Astrocyte of the cerebellum (primary cell): ENCODE measurements at regions of chr12 and their contacts with region 1.

Region 1: GRCh38 chr12:20212658-20213555 is 155.4 kb upstream of the PDE3A start:
- DNase-seq: peak; percentile 100
- H3K4me3 ChIP-seq: no peak overlapping the region
- CTCF ChIP-seq: no peak

Region 2: DNA sequence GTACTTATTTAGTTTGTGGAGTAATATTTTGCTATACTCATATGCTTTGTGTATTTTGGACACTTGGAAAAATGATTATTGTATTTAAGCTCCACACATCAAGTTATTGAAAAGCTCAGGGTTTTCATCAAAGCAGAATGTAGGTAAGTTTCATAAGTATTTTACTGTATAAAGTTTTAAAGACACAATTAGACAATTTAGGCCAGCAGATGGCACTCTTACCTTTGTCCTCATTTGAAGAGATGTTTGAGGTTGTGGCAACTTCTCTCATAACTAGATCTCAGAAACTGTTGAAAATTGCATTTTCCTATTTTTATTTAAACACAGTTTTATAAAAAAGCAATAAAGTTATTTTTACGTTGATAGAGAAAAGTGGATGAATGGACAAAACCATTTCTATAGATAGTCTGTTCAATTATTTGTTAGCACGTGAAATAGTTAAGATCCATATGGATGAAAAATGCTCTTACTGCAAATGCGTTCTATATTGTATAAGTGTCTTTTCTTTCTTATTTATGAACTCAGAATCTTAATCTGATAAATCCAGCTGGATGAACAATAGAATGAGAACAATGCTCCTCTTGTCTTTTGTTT is 473.6 kb before region 1 on chr12:
- in situ Hi-C with region 1: loop called (anchors 25 kb)
- DNase-seq: peak; percentile 78
- H3K4me3 ChIP-seq: no peak overlapping the region
- CTCF ChIP-seq: peak; percentile 47

Region 3: DNA sequence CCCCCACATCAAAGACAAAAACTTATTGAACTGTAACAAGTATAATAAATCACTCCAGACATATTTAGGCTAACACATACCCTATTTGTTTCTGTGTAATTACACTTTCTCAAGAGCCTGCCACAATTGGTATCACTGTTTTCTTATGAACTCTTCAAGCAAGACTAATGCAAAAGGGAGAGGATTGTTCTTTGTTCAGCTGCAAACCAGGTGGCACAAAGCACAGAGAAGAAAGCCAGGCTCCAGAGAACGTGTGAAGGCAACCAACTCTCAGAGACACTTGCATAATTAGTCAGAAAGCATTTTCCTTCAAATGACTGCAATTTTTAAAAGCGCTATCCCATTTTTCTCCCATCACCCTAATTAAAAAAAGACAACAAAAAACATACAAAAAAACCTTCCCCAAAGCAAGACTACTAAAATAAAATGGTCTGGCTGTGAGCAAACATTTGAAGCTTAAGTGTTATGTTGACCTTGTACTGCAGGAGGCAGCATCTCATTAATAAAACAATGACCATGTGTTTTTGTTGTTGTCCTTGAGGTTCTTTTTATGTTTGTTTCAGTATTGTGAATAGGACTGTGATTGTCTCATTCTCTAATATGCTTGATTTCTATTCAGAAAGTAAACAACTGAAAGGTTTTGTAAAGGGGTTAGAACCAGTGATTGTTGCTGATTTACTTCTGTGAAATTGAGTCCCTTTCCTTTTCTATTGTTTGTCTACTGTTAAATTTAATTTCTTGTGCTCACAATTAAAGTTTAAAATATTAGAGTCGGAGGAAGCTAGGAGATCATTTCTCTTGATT is 297.3 kb before region 1 on chr12:
- in situ Hi-C with region 1: loop called (anchors 10 kb)
- DNase-seq: peak; percentile 47
- H3K4me3 ChIP-seq: no peak overlapping the region
- CTCF ChIP-seq: peak; percentile 49